GM12878 (cell line): ENCODE measurements at regions of chr10 and their contacts with region 1.

Region 1: GRCh38 chr10:69506834-69507721 is 55.8 kb downstream of the TSPAN15 start:
- DNase-seq: no peak
- ATAC-seq: no peak
- H3K4me3 ChIP-seq: no peak overlapping the region
- H3K27ac ChIP-seq: no peak overlapping the region
- H3K4me1 ChIP-seq: no peaks in the 10 kb centered on the region
- H3K27me3 ChIP-seq: no peaks in the 10 kb centered on the region
- CTCF ChIP-seq: no peak
- EP300 ChIP-seq: no peak
- POLR2A ChIP-seq: no peak
- RAD21 ChIP-seq: no peak

Region 2: DNA sequence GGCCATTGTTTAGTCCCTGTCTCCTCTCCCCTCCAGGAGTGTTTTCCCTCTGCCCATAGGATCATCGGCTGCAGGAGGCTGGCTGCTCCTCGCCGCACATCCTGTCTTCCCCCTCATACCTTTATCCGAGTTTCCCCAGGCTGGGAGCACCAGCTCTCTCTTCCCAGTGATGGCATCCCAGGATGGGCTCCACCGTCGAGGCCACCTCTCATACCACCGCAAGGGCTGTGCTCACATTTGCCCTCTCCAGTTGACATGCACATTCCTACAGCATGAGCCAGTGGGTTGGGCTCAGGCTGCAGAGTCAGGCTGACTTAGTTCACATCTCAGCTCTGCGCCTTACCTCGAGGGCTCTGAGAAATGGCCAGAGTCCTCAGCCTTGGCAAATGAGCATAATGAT is 274.8 kb before region 1 on chr10:
- CTCF ChIA-PET with region 1: interaction called, 6 read pairs
- POLR2A ChIA-PET with region 1: no interaction called
- RAD21 ChIA-PET with region 1: no interaction called
- SMC1A ChIA-PET with region 1: no interaction called
- in situ Hi-C with region 1: loop called (anchors 5 kb)
- intact Hi-C with region 1: loop called (anchors 1 kb)
- DNase-seq: no peak
- ATAC-seq: no peak
- H3K4me3 ChIP-seq: no peak overlapping the region
- H3K27ac ChIP-seq: no peak overlapping the region
- H3K4me1 ChIP-seq: peaks cover 21% of the 10 kb centered on the region
- H3K27me3 ChIP-seq: no peaks in the 10 kb centered on the region
- CTCF ChIP-seq: no peak
- EP300 ChIP-seq: no peak
- POLR2A ChIP-seq: no peak
- RAD21 ChIP-seq: no peak

Region 3: DNA sequence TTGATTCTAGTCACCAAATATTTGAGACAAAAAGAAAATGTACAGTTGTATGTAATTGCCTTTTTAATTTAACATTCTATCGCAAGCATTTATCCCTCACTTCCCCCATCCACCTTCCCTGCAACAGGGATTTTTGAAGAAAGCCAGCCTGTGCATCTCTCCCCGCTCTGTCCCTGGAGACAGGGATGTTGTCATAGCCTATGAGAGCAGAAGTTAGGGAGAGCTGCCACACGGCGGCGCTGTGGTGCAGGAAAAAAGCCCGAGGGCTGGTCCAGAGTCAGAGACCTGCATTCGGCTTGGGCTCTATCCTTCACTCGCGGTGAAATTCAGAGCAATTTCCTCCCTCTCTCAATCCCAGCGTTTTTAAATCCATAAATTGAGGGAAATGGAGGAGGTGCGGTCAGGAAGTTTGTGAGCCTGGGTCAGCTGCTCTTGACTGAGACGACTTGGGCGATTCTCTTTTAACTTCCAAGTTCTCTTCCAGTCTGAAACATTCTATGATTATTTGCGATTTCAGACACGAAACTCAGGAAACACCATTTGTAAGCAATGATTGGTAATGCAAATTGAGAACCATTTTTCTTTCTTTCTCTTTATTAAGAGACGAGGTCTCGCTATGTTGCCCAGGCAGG is 269.4 kb before region 1 on chr10:
- CTCF ChIA-PET with region 1: interaction called, 6 read pairs
- POLR2A ChIA-PET with region 1: interaction called, 3 read pairs
- RAD21 ChIA-PET with region 1: interaction called, 3 read pairs
- SMC1A ChIA-PET with region 1: no interaction called
- in situ Hi-C with region 1: loop called (anchors 5 kb)
- intact Hi-C with region 1: loop called (anchors 1 kb)
- DNase-seq: no peak
- ATAC-seq: peak; percentile 100
- H3K4me3 ChIP-seq: no peak overlapping the region
- H3K27ac ChIP-seq: no peak overlapping the region
- H3K4me1 ChIP-seq: no peaks in the 10 kb centered on the region
- H3K27me3 ChIP-seq: no peaks in the 10 kb centered on the region
- CTCF ChIP-seq: peak; percentile 85 to 98 (median 93)
- EP300 ChIP-seq: no peak
- POLR2A ChIP-seq: no peak
- RAD21 ChIP-seq: peak; percentile 94

Region 4: GRCh38 chr10:69418052-69418752 is 88.9 kb before region 1 on chr10:
- CTCF ChIA-PET with region 1: interaction called, 15 read pairs
- POLR2A ChIA-PET with region 1: no interaction called
- RAD21 ChIA-PET with region 1: no interaction called
- SMC1A ChIA-PET with region 1: interaction called, 17 read pairs
- in situ Hi-C with region 1: loop called (anchors 5 kb)
- intact Hi-C with region 1: no loop called
- DNase-seq: no peak
- ATAC-seq: no peak
- H3K4me3 ChIP-seq: no peak overlapping the region
- H3K27ac ChIP-seq: no peak overlapping the region
- H3K4me1 ChIP-seq: peaks cover under 1% of the 10 kb centered on the region; the same call in 1 of the 2 replicates
- H3K27me3 ChIP-seq: no peaks in the 10 kb centered on the region; a peak in 2 of 4 replicates
- CTCF ChIP-seq: no peak
- EP300 ChIP-seq: no peak
- POLR2A ChIP-seq: no peak
- RAD21 ChIP-seq: no peak

Region 5: DNA sequence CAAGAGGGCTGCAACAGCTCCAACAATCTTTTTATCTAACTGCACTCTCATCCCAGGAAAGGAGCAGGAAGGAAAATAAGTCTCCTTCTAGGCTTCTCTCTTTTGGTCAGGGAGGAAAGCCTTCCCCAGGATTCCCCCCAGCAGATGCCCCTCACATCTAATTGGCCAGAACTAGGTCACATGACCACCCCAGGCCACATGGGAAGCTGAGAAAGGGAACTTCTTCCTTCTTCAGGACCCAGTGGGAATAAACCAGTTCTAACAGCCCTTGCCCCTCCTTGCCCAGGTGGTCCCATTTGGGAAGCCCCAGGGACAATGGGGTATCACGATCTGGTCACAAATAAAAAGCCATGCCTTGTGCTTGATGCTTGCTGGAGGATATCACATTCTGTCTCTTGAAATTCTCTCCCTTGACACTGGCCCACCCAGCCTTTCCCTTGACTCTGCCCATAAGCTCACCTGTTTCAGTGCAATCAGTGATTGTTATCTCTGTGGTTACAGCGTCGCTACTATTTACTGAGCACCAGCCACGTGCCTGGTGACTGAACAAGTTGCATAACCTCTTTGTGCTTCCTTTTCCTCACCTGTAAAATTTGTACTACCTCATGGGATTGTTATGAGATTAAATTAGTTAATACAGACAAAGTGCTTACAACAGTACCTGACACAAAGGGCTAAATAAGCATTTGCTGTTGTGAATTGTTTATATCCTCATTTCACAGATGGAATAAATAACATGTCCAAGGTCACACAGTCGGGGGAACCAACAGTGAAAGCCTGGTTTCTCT is 81.4 kb before region 1 on chr10:
- CTCF ChIA-PET with region 1: interaction called, 29 read pairs
- POLR2A ChIA-PET with region 1: no interaction called
- RAD21 ChIA-PET with region 1: interaction called, 11 read pairs
- SMC1A ChIA-PET with region 1: interaction called, 17 read pairs
- in situ Hi-C with region 1: no loop called
- intact Hi-C with region 1: loop called (anchors 1 kb)
- DNase-seq: no peak
- ATAC-seq: peak; percentile 31
- H3K4me3 ChIP-seq: no peak overlapping the region
- H3K27ac ChIP-seq: no peak overlapping the region
- H3K4me1 ChIP-seq: peaks cover 9% of the 10 kb centered on the region; the same call in 1 of the 2 replicates
- H3K27me3 ChIP-seq: no peaks in the 10 kb centered on the region
- CTCF ChIP-seq: no peak
- EP300 ChIP-seq: no peak
- POLR2A ChIP-seq: no peak
- RAD21 ChIP-seq: no peak

Region 6: DNA sequence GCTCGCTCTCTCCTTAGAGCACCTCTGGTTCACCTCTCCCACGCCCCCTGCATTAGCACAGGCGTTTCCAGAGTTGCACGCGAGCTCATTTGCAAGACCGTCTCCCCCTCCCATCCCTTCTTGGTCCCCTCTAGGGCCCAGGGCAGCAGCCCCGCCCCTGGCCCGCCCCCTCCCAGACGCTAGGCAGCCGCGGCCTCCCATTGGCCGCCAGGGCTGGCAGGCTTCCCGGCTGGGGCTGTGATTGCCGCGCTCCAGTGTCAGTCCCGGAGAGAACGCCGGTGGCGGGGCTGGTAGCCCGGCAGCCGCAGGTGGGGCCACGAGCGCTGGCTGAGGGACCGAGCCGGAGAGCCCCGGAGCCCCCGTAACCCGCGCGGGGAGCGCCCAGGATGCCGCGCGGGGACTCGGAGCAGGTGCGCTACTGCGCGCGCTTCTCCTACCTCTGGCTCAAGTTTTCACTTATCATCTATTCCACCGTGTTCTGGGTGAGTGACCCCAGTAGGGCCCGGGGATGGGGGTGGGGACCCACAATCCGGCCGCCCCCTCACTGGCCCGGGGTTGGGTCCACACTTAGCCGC is 55.8 kb before region 1 on chr10 and contains the start of gene TSPAN15:
- CTCF ChIA-PET with region 1: interaction called, 14 read pairs
- POLR2A ChIA-PET with region 1: no interaction called
- RAD21 ChIA-PET with region 1: interaction called, 4 read pairs
- SMC1A ChIA-PET with region 1: no interaction called
- in situ Hi-C with region 1: no loop called
- intact Hi-C with region 1: no loop called
- DNase-seq: peak; percentile 45
- ATAC-seq: peak; percentile 97
- H3K4me3 ChIP-seq: peak within 1 kb of the TSS; percentile 75
- H3K27ac ChIP-seq: no peak within 1 kb of the TSS
- H3K4me1 ChIP-seq: no peaks in the 10 kb centered on the region; the same call in 1 of the 2 replicates
- H3K27me3 ChIP-seq: no peaks in the 10 kb centered on the region; a peak in 1 of 4 replicates
- CTCF ChIP-seq: no peak
- EP300 ChIP-seq: no peak
- POLR2A ChIP-seq: no peak
- RAD21 ChIP-seq: no peak
- polyA plus RNA-seq, gene TSPAN15: not detected

Region 7: GRCh38 chr10:69483963-69484362 is 23.1 kb before region 1 on chr10:
- CTCF ChIA-PET with region 1: no interaction called
- POLR2A ChIA-PET with region 1: no interaction called
- RAD21 ChIA-PET with region 1: no interaction called
- SMC1A ChIA-PET with region 1: no interaction called
- in situ Hi-C with region 1: no loop called
- intact Hi-C with region 1: no loop called
- DNase-seq: no peak
- ATAC-seq: no peak
- H3K4me3 ChIP-seq: no peak overlapping the region
- H3K27ac ChIP-seq: no peak overlapping the region
- H3K4me1 ChIP-seq: peaks cover 11% of the 10 kb centered on the region
- H3K27me3 ChIP-seq: no peaks in the 10 kb centered on the region
- CTCF ChIP-seq: no peak
- EP300 ChIP-seq: no peak
- POLR2A ChIP-seq: no peak
- RAD21 ChIP-seq: no peak